H1 (cell line): ENCODE measurements at regions of chr4 and their contacts with region 1.

Region 1: DNA sequence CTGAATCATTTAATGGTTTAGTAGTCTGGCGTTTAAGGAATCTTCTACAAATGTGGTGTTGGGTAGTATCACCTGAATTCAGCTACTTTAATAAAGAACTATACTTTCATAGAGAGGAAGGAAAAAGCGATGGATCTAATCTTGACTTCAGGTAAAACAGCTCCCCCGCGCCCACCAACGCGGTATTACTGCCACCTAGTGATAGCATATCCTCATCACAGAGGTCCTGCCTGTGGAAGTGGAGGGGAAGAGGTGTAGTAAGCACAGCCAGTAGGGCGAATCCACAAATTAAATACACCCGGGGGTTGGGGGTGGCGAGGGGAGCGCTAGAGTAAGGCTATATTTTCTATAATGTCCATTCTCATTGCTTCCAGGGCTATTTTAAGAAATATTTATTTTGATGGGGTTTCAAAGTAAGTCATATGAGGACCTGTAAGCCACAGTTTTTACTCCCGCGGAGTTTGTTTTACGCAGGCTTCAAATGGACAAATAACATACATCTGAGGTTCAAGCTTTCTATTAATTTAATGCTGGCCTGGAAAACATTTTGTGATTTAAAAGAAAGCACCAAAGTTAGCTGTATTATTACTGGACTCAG is 8.3 kb upstream of the DAPP1 start:
- DNase-seq: peak in 1 of 2 experiments; percentile 83
- H3K4me3 ChIP-seq: no peak overlapping the region
- H3K27ac ChIP-seq: no peak overlapping the region
- H3K4me1 ChIP-seq: peaks cover 0 to 2% (median 0%) of the 10 kb centered on the region in 4 experiments; a peak in 1 of 7 replicates
- H3K27me3 ChIP-seq: no peaks in the 10 kb centered on the region
- CTCF ChIP-seq: peak; percentile 74 to 89 (median 79)
- EP300 ChIP-seq: no peak
- POLR2A ChIP-seq: no peak
- RAD21 ChIP-seq: peak; percentile 96 to 97

Region 2: DNA sequence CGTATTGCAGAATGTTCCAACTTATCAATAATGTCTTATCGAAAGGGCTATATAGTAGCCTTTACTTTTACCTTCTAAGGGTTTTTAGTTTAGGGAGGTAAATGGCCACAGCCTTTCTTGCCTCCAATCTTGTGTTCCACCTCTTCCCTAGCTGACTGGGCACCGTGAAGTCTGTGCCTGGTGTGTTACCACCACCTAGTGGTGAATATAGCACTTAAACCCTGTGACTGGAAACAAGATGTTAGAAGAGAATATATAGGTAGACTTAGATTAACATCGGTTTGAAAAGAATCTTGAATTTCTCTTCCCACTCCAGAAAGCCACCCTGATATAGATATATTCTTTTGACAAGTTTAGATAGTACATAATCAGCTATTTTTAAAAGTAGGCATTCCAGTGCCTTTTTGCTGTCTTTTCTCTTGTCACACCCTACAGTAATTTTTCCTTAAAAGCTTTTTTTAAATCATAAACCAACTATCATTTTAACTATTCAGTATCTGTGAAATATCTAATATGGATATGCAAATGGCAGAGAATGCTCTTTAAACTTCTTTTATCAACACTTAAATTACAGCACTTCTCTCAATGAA is 345.4 kb before region 1 on chr4:
- CTCF ChIA-PET with region 1: interaction called, 12 read pairs
- POLR2A ChIA-PET with region 1: no interaction called
- DNase-seq: no peak
- H3K4me3 ChIP-seq: no peak overlapping the region
- H3K27ac ChIP-seq: no peak overlapping the region
- H3K4me1 ChIP-seq: no peaks in the 10 kb centered on the region; a peak in 1 of 7 replicates
- H3K27me3 ChIP-seq: no peaks in the 10 kb centered on the region
- CTCF ChIP-seq: peak; percentile 50 to 86 (median 82)
- EP300 ChIP-seq: no peak
- POLR2A ChIP-seq: no peak
- RAD21 ChIP-seq: peak; percentile 98 to 99

Region 3: DNA sequence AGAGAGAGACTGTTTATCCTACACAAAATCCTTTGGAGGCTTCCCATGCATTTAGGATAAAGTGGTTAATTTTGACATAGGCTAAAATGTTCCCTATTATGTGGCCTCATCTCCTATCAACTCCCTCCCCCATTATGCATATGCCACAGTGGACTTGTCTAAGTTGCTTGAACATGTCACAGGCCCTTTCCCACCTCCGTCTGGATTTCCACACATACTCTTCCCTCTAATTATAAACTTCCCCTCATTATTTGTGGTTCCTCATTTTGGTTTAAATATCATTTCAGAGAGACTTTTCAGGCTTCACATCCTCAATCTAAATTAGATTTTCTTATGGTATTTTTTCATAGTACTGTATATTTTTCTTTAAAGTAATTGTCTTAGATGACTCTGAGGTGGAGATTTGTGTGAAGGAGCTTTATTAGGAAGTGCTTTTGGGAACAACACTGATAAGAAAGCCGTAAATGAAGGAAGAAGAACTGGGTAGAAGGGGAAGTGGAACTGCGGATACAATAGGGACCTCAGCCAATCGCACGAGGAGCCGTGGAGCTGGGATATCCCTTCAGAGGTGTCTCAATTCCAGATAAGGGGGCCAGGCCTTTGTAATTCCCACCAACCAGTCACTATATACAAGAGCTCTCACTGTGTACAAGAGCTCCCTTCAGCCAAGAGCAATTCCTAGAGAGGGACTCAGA is 289.6 kb before region 1 on chr4:
- CTCF ChIA-PET with region 1: interaction called, 10 read pairs
- POLR2A ChIA-PET with region 1: no interaction called
- DNase-seq: no peak
- H3K4me3 ChIP-seq: no peak overlapping the region
- H3K27ac ChIP-seq: no peak overlapping the region
- H3K4me1 ChIP-seq: no peaks in the 10 kb centered on the region
- H3K27me3 ChIP-seq: no peaks in the 10 kb centered on the region
- CTCF ChIP-seq: no peak
- EP300 ChIP-seq: no peak
- POLR2A ChIP-seq: no peak
- RAD21 ChIP-seq: no peak

Region 4: GRCh38 chr4:99563310-99564186 is 244.8 kb before region 1 on chr4 and contains the start of gene TRMT10A:
- CTCF ChIA-PET with region 1: interaction called, 29 read pairs
- POLR2A ChIA-PET with region 1: interaction called, 8 read pairs
- DNase-seq: peak; percentile 90 to 94
- H3K4me3 ChIP-seq: peak within 1 kb of the TSS; percentile 73 to 89 (median 88)
- H3K27ac ChIP-seq: peak within 1 kb of the TSS; percentile 94
- H3K4me1 ChIP-seq: no peaks in the 10 kb centered on the region; a peak in 1 of 7 replicates
- H3K27me3 ChIP-seq: no peaks in the 10 kb centered on the region
- CTCF ChIP-seq: no peak
- EP300 ChIP-seq: no peak
- POLR2A ChIP-seq: peak; percentile 66 to 83
- RAD21 ChIP-seq: 0 out of 4 replicates have a peak, but pooled peaks of 1 of the 2 experiments have one; percentile 16
- total RNA-seq, gene TRMT10A: 3.3 and 3.8 TPM in 2 replicates

Region 5: DNA sequence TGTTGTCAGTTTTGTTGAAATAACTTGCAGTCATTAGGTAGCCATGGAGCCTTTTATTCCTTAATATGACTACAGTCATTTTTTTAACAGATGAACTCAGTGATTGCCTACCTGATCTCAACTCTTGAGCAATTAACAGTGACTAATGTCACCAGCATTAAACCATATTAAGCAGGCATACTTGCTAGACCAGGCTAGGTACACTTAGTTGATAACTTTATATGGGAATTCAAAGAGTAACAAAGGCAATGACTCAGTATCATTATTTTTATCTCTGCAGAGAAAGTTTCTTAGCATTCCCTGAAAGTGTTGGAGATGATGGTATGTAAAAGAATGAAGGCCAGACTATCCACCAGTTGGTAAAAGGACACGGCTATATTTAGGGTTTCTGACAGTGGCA is 150.6 kb before region 1 on chr4 and contains the start of gene C4orf54:
- CTCF ChIA-PET with region 1: interaction called, 10 read pairs
- POLR2A ChIA-PET with region 1: no interaction called
- DNase-seq: no peak
- H3K4me3 ChIP-seq: no peak within 1 kb of the TSS
- H3K27ac ChIP-seq: no peak within 1 kb of the TSS
- H3K4me1 ChIP-seq: peaks cover 0 to 2% (median 0%) of the 10 kb centered on the region in 4 experiments; a peak in 1 of 7 replicates
- H3K27me3 ChIP-seq: no peaks in the 10 kb centered on the region
- CTCF ChIP-seq: no peak
- EP300 ChIP-seq: no peak
- POLR2A ChIP-seq: no peak
- RAD21 ChIP-seq: no peak
- total RNA-seq, gene C4orf54: not detected in 2 replicates

Region 6: DNA sequence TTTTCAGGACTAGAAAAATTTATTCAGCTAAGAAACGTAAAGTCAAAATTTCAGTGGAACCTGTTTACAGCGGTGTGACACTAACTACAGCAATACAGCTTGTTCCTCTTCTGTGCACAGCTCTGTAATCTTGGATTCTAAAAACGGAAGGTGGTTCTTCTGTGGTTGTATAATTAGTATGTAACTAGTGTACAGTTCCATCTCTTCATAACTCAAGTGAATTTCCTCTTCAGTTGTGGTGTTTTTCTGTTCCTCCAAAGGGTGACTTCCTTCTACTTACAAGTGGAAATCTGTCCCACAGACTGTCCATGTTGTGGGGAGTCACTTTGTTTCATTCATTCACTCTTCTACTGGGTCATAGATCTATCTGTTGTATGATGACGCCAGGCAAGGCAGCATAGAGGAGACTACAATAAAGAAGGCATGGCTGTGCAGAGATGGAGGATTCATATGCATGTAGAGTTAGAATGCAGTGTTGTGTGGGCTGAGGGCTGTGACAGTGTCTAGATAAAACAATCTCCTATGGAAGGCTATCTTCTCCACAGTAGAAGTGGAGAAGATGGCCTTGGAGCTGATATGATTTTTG is 13.7 kb after region 1 on chr4:
- CTCF ChIA-PET with region 1: interaction called, 24 read pairs
- POLR2A ChIA-PET with region 1: no interaction called
- DNase-seq: no peak
- H3K4me3 ChIP-seq: no peak overlapping the region
- H3K27ac ChIP-seq: no peak overlapping the region
- H3K4me1 ChIP-seq: no peaks in the 10 kb centered on the region
- H3K27me3 ChIP-seq: no peaks in the 10 kb centered on the region
- CTCF ChIP-seq: no peak
- EP300 ChIP-seq: no peak
- POLR2A ChIP-seq: no peak
- RAD21 ChIP-seq: no peak

Region 7: GRCh38 chr4:99927566-99927965 is 119.2 kb after region 1 on chr4:
- CTCF ChIA-PET with region 1: no interaction called
- POLR2A ChIA-PET with region 1: no interaction called
- DNase-seq: no peak
- H3K4me3 ChIP-seq: no peak overlapping the region
- H3K27ac ChIP-seq: no peak overlapping the region
- H3K4me1 ChIP-seq: no peaks in the 10 kb centered on the region
- H3K27me3 ChIP-seq: no peaks in the 10 kb centered on the region
- CTCF ChIP-seq: no peak
- EP300 ChIP-seq: no peak
- POLR2A ChIP-seq: no peak
- RAD21 ChIP-seq: no peak